ENCODE measurements at regions of chr1 and their contacts with region 1.

Region 1: GRCh38 chr1:10890491-10891071 is 94.1 kb upstream of the CASZ1 start:
- DNase-seq: no peak
- H3K4me3 ChIP-seq: no peak overlapping the region
- H3K27ac ChIP-seq: no peak overlapping the region
- H3K4me1 ChIP-seq: no peaks in the 10 kb centered on the region
- H3K27me3 ChIP-seq: peaks cover 28% of the 10 kb centered on the region
- CTCF ChIP-seq: no peak
- POLR2A ChIP-seq: no peak

Region 2: GRCh38 chr1:10818262-10819197 is 72.1 kb before region 1 on chr1:
- intact Hi-C with region 1: loop called in 1 of 2 experiments (anchors 2 kb)
- DNase-seq: no peak
- H3K4me3 ChIP-seq: no peak overlapping the region
- H3K27ac ChIP-seq: no peak overlapping the region
- H3K4me1 ChIP-seq: no peaks in the 10 kb centered on the region
- H3K27me3 ChIP-seq: no peaks in the 10 kb centered on the region
- CTCF ChIP-seq: no peak
- POLR2A ChIP-seq: no peak

Region 3: GRCh38 chr1:11126569-11126968 is 236.0 kb after region 1 on chr1:
- intact Hi-C with region 1: no loop called
- DNase-seq: no peak
- H3K4me3 ChIP-seq: no peak overlapping the region
- H3K27ac ChIP-seq: no peak overlapping the region
- H3K4me1 ChIP-seq: peaks cover 0 to 2% of the 10 kb centered on the region in 2 donors
- H3K27me3 ChIP-seq: no peaks in the 10 kb centered on the region
- CTCF ChIP-seq: no peak
- POLR2A ChIP-seq: no peak

Region 4: DNA sequence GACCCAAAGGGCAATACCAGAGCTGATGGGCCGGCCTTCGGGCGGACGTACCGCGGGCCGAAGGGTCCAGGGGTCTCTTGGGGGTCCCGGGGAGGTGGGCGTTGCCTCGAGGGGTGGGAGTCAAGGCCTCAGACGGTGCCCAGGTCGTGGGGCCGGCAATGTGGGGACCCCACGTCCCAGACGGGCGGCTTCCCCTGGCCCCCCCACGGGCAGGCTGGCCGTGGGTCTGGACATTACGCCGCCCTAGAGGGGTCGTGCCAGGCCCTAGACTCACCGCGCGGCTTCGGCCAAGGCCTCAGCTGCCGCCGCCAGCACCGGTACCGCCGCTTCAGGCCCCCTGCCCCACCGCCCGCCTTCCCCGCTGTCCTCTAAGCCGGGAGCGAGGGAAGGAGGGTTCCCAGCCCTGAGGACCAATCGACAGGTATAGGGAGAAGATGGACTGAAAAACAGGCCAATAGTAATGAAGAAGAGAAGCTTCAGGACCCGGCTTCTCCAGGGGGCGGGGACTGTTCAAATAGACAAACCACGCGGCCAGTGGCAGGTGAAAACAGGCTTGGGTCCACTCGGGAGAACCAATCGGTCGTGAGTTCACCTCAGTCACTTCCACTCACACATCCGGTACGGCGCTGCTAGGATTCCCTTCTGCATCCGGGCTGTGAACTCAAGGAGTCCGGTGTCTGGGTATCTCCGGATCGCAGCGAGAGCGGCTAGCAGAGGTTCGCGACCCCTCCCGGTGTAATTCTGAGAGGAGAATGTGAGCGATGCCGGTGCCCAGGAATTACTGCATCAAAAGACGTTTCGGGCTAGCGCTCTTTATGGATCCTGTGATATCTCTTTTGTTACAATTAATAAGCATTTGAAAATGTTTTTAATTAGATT is 371.8 kb after region 1 on chr1 and contains the start of gene MTOR:
- intact Hi-C with region 1: no loop called
- DNase-seq: peak; percentile 98 to 100 (median 99)
- H3K4me3 ChIP-seq: peak within 1 kb of the TSS; percentile 81 to 96 (median 90)
- H3K27ac ChIP-seq: peak within 1 kb of the TSS in 3 of 5 donors; percentile 60 to 87 (median 63)
- H3K4me1 ChIP-seq: peaks cover 10 to 14% of the 10 kb centered on the region in 2 donors
- H3K27me3 ChIP-seq: no peaks in the 10 kb centered on the region
- CTCF ChIP-seq: peak in 3 of 6 experiments; percentile 14 to 29 (median 24)
- POLR2A ChIP-seq: peak; percentile 36 to 62
- total RNA-seq, gene MTOR: 27.6 to 45.3 (median 36.8) TPM

Measured in adrenal gland (tissue), 19 donors.